Aorta (tissue), 5 donors: ENCODE measurements at regions of chr9 and their contacts with region 1.

Region 1: DNA sequence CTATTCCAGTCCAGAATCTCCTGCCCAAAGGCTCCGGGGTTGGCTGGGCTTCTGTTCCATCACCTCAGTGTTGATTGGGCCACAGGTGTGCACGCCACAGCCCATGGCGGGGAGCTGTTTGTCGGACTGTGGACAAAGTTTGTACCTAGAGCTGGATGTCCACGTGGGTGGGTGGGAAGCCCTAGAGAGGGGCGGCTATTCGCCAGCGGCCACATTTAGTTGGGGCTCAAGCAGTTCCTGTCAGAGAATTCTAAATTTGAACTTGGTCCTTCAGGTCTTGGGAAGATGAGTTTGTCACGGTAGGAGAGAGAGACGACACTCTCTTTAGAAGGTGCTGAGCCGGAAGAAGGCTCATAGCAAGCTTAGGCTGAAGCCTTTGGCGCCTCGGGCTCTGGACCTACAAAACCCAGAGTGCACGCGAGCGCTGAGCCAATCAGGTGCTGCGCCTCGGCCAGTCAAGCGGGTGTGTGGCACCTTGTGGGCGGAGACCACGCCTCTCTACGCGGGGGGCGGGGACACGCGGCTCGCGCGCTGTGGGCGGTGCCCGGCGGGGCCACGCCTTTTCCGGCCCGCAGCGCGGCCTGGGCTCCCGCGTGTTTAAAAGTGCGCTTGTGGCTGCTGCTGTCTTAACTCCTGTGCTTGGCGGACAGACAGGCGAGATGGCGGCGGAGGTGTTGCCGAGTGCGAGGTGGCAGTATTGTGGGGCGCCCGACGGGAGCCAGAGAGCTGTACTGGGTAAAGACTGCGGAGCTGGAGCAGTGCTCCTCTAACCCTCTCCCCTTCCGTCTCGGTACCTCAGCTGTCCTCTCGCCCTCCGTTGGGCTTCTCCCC is at the start of gene POLR1E:
- DNase-seq: peak; percentile 96 to 98
- ATAC-seq: peak; percentile 97
- H3K4me3 ChIP-seq: peak within 1 kb of the TSS; percentile 45 to 48
- H3K27ac ChIP-seq: peak within 1 kb of the TSS; percentile 87 to 93
- H3K4me1 ChIP-seq: peaks cover 0 to 6% of the 10 kb centered on the region in 2 donors
- H3K27me3 ChIP-seq: no peaks in the 10 kb centered on the region
- total RNA-seq, gene POLR1E: 16.7 to 23.8 TPM

Region 2: GRCh38 chr9:37324261-37324683 is 161.3 kb before region 1 on chr9:
- intact Hi-C with region 1: no loop called
- DNase-seq: no peak
- ATAC-seq: no peak
- H3K4me3 ChIP-seq: no peak overlapping the region
- H3K27ac ChIP-seq: no peak overlapping the region
- H3K4me1 ChIP-seq: no peaks in the 10 kb centered on the region
- H3K27me3 ChIP-seq: no peaks in the 10 kb centered on the region

Region 3: DNA sequence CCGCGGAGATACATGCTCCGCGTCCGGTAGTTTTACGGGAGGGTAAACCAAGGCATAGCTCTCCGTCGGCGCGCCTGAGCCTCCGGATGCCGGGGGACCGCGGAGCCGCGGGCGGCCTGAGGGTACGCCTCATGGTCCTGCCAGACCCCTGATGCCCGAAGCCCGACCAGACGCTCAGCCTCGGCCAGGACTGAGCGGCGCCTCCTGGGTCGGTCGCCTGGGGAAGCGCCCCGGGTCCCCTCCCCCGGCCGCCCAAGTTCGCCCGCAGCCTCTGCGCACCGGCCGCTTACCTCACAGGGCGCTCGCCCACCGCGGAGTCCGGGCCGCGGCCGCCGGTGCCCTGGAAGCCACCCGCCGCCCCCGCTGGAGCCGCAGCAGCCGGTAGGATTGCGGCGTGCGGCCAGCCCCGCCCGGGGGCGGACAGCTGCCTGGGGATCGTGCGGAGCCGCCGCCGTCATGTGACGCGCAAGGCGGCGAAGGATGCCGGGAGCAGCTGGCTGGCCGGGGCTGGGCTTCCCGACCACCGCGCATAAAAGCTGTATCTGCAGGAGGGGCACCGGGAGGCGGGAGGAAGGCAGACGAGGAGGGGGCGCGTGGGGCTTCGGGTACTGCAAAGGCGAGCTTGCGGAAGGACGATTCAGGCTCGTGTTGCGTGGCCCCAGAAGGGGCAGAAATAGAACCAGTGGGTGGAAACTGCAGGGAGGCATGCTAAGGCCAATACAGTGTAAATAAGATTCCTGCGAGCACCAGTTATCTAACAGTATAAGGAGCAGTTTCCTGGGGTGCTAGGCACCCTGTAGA is 90.5 kb after region 1 on chr9 and contains the start of gene FBXO10:
- intact Hi-C with region 1: loop called in 1 of 2 experiments (anchors 5 kb)
- DNase-seq: peak; percentile 80 to 90
- ATAC-seq: peak; percentile 91
- H3K4me3 ChIP-seq: peak within 1 kb of the TSS; percentile 39 to 78
- H3K27ac ChIP-seq: peak within 1 kb of the TSS in 1 of 2 donors; percentile 53
- H3K4me1 ChIP-seq: no peaks in the 10 kb centered on the region
- H3K27me3 ChIP-seq: no peaks in the 10 kb centered on the region
- total RNA-seq, gene FBXO10: 6.2 to 7.8 TPM

Region 4: DNA sequence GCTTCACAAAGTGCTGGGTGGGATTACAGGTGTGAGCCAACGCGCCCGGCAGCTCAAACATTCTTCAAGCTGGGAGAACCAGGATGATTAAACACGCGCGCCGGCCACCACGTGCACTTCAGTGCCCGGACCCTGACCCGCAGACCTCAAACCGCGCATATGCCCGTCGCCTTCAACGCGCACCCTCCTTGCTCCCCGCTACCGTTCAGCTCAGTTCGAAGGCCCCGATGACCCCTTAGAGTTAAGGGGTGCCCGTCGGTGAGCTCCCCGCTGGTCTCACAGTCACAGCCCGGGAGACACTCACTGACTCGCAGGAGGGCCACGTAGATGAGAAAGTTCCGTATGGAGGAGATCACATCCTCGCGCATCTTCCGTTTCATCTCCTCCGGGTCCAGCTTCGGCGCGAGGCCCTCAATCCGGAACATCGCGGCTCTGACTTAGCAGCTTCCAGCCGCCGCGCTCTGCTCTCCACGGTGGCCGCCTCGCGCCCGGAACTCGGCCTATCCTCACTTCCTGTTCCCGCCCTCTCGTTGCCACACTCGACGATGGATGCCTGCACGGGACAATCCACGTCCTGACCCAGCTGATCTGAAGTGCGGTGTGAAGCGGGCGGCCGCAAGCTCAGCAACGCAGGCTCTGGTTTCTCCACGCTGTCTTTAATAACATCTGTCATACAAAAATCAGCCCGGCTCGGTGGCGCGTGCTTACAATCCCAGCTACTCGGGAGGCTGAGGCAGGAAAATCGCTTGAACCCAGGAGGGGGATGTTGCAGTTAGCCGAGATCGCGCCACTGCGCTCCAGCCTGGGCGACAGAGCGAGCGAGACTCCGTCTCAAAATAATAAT is 106.7 kb after region 1 on chr9 and contains the start of gene TOMM5:
- intact Hi-C with region 1: loop called (anchors 2 to 5 kb)
- DNase-seq: peak; percentile 96 to 97
- ATAC-seq: peak; percentile 98
- H3K4me3 ChIP-seq: peak within 1 kb of the TSS; percentile 84 to 96
- H3K27ac ChIP-seq: peak within 1 kb of the TSS in 1 of 2 donors; percentile 28
- H3K4me1 ChIP-seq: no peaks in the 10 kb centered on the region
- H3K27me3 ChIP-seq: no peaks in the 10 kb centered on the region
- total RNA-seq, gene TOMM5: 39.8 to 52.1 TPM

Region 5: DNA sequence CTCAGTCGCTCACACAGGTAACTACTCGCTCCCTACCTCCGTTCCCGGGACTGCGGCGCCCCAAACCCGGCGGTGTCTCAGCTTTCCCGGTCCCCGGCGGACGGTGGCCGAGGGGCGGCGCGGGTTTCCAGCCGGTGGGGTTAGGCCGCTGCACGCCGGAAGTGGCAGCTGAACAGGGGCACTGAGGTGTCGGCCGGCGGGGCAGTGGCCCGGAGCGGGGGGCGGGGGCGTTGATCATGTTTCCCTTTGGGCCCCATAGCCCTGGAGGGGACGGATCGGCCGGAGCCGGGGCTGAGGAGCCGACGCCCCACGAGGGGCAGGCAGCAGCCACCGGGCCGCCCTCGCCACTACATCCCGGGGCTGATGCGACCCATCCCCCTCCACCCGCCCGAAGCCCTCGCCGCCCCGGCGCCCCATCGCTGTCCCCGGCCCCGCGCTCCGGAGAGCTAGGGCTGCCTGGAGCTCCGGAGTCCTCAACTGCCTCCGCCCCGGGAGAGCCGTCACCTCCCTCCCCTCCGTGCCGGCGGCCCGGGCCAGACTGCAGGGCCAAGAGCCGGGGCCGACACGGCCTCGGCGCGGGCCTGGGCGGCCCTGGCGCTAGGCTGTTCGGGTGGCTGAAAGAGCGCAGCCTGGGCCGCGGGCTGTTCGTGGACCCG is 315.2 kb after region 1 on chr9 and contains the start of gene DCAF10:
- intact Hi-C with region 1: loop called in 1 of 2 experiments (anchors 10 kb)
- DNase-seq: peak; percentile 89 to 96
- ATAC-seq: peak; percentile 99
- H3K4me3 ChIP-seq: peak within 1 kb of the TSS; percentile 59 to 79
- H3K27ac ChIP-seq: peak within 1 kb of the TSS; percentile 30 to 45
- H3K4me1 ChIP-seq: peaks cover 0 to 4% of the 10 kb centered on the region in 2 donors
- H3K27me3 ChIP-seq: no peaks in the 10 kb centered on the region
- total RNA-seq, gene DCAF10: 27.7 to 29.5 TPM

Region 6: GRCh38 chr9:38392235-38393127 is 906.9 kb after region 1 on chr9 and contains the start of gene ALDH1B1:
- intact Hi-C with region 1: loop called in 1 of 2 experiments (anchors 10 kb)
- DNase-seq: peak; percentile 93 to 97
- ATAC-seq: peak; percentile 93
- H3K4me3 ChIP-seq: peak within 1 kb of the TSS; percentile 56 to 67
- H3K27ac ChIP-seq: peak within 1 kb of the TSS; percentile 95 to 97
- H3K4me1 ChIP-seq: no peaks in the 10 kb centered on the region
- H3K27me3 ChIP-seq: no peaks in the 10 kb centered on the region
- total RNA-seq, gene ALDH1B1: 141 to 336 TPM